ENCODE measurements at regions of chr9 and their contacts with region 1.

Region 1: DNA sequence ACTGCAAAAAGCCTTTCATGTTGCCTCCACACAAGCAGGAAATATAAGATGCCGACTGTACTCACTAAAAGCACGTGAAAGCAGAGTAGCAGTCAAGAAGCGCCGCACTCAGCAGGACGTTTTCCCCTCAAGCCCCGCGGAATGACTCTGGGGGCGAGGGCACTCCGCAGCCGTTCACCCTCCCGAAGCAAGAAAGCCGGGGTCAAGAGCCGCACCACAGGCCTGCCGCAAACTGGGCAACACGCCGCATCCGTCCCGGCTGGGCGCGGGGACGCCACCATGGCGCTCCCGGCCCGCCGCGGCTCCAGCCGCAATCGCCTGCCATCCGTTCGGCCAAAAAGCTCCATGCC is 364 bp downstream of the RPS6 start:
- DNase-seq: peak; percentile 54
- ATAC-seq: peak; percentile 16
- H3K4me3 Mint-ChIP-seq: peak overlapping the region; percentile 99
- H3K27ac Mint-ChIP-seq: peak overlapping the region; percentile 100
- H3K4me1 Mint-ChIP-seq: peaks cover 41% of the 10 kb centered on the region
- H3K27me3 Mint-ChIP-seq: no peaks in the 10 kb centered on the region

Region 2: DNA sequence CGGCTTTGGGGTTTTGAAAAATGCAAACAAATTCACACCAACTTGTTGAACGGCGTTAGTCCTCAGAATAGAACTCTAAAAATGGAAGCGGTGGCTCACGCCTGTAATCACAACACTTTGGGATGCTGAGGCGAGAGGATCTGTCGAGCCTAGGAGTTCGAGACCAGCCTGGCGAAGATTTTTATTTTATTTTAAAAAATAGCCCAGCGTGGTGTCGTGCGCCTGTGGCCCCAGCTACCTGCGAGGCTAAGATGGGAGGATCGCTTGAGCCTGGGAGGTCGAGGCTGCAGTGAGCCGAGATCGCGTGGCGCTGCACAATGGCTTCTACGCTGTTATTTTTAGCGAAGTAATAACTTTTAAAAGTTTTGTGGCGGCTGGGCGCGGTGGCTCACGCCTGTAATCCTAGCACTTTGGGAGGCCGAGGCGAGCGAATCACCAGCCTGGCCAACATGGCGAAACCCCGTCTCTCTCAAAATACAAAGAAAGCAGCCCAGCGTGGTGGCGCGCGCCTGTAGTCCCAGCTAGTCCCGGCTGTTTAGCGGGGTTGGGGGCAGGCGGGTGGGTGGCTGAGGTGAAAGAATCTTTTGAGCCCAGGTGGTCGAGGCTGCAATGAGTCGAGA is 251.7 kb before region 1 on chr9:
- CTCF ChIA-PET with region 1: no interaction called
- POLR2A ChIA-PET with region 1: no interaction called
- intact Hi-C with region 1: loop called in 1 of 2 experiments (anchors 1 kb)
- DNase-seq: peak; percentile 54
- ATAC-seq: peak; percentile 14
- H3K4me3 Mint-ChIP-seq: peak overlapping the region; percentile 92
- H3K27ac Mint-ChIP-seq: peak overlapping the region; percentile 88
- H3K4me1 Mint-ChIP-seq: peaks cover 58% of the 10 kb centered on the region
- H3K27me3 Mint-ChIP-seq: no peaks in the 10 kb centered on the region

Region 3: DNA sequence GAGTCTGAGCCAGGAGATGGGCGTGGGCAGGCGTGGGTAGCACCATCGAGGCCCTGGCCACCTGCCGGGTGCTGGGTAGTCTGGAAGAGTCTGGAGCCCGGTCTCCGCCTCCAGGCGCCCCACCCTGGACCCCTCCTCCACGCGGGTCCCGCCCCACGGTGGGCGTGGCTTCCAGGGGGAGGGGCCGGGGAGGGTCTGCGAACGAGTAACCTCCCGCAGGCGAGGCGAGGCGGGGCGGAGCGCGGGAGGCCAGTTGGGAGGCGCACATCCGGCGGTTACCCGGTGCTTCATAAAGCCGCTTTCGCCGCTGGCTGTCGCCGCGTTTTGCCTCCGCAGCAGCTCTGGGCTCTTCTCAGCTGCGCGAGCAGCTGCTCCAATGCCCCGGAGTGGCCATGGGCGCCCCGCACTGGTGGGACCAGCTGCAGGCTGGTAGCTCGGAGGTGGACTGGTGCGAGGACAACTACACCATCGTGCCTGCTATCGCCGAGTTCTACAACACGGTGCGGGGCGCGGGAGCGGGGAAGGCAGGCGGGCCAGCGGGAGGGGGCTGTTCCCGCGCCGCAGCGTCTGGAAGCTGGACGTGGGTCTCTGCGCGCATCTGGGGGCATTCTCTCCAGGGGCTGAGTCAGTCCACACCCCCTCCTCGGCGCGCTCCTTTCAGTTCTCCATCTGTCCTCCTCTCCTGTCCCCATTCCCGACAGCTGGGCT is 29.2 kb after region 1 on chr9 and contains the start of gene ACER2:
- CTCF ChIA-PET with region 1: no interaction called
- POLR2A ChIA-PET with region 1: interaction called, 4 read pairs
- intact Hi-C with region 1: loop called (anchors 1 kb)
- DNase-seq: peak; percentile 96
- ATAC-seq: peak; percentile 96
- H3K4me3 Mint-ChIP-seq: peak within 1 kb of the TSS; percentile 89
- H3K27ac Mint-ChIP-seq: peak within 1 kb of the TSS; percentile 68
- H3K4me1 Mint-ChIP-seq: peaks cover 6% of the 10 kb centered on the region
- H3K27me3 Mint-ChIP-seq: no peaks in the 10 kb centered on the region
- total RNA-seq, gene ACER2: 1.5 to 1.6 TPM

Region 4: GRCh38 chr9:19456996-19457692 is 77.5 kb after region 1 on chr9:
- CTCF ChIA-PET with region 1: interaction called, 4 read pairs
- POLR2A ChIA-PET with region 1: interaction called, 4 read pairs
- intact Hi-C with region 1: loop called (anchors 1 to 5 kb)
- DNase-seq: peak; percentile 76
- ATAC-seq: peak; percentile 92
- H3K4me3 Mint-ChIP-seq: no peak overlapping the region
- H3K27ac Mint-ChIP-seq: no peak overlapping the region
- H3K4me1 Mint-ChIP-seq: peaks cover 9% of the 10 kb centered on the region
- H3K27me3 Mint-ChIP-seq: no peaks in the 10 kb centered on the region